ENCODE measurements at regions of chr12 and their contacts with region 1.

Region 1: GRCh38 chr12:57846577-57847319 is at the start of gene CTDSP2:
- DNase-seq: peak; percentile 99
- H3K4me3 ChIP-seq: peak within 1 kb of the TSS; percentile 100
- H3K27ac ChIP-seq: peak within 1 kb of the TSS; percentile 98
- H3K4me1 ChIP-seq: peaks cover 33% of the 10 kb centered on the region
- H3K27me3 ChIP-seq: no peaks in the 10 kb centered on the region
- CTCF ChIP-seq: no peak
- total RNA-seq, gene CTDSP2: 115 and 132 TPM in 2 replicates

Region 2: GRCh38 chr12:57592551-57593165 is 254.1 kb before region 1 on chr12:
- CTCF ChIA-PET with region 1: no interaction called
- POLR2A ChIA-PET with region 1: no interaction called
- intact Hi-C with region 1: no loop called
- DNase-seq: no peak
- H3K4me3 ChIP-seq: no peak overlapping the region
- H3K27ac ChIP-seq: no peak overlapping the region
- H3K4me1 ChIP-seq: peaks cover 7% of the 10 kb centered on the region
- H3K27me3 ChIP-seq: no peaks in the 10 kb centered on the region
- CTCF ChIP-seq: no peak

Region 3: GRCh38 chr12:57893431-57894353 is 46.9 kb after region 1 on chr12:
- CTCF ChIA-PET with region 1: interaction called, 4 read pairs
- POLR2A ChIA-PET with region 1: no interaction called
- intact Hi-C with region 1: loop called (anchors 1 kb)
- DNase-seq: peak; percentile 90
- H3K4me3 ChIP-seq: peak overlapping the region; percentile 5
- H3K27ac ChIP-seq: peak overlapping the region; percentile 97
- H3K4me1 ChIP-seq: peaks cover 71% of the 10 kb centered on the region
- H3K27me3 ChIP-seq: no peaks in the 10 kb centered on the region
- CTCF ChIP-seq: no peak

Region 4: GRCh38 chr12:57904848-57905811 is 58.4 kb after region 1 on chr12:
- CTCF ChIA-PET with region 1: interaction called, 5 read pairs
- POLR2A ChIA-PET with region 1: interaction called, 18 read pairs
- intact Hi-C with region 1: no loop called
- DNase-seq: peak; percentile 94
- H3K4me3 ChIP-seq: no peak overlapping the region
- H3K27ac ChIP-seq: no peak overlapping the region
- H3K4me1 ChIP-seq: no peaks in the 10 kb centered on the region
- H3K27me3 ChIP-seq: no peaks in the 10 kb centered on the region
- CTCF ChIP-seq: peak; percentile 100

Region 5: DNA sequence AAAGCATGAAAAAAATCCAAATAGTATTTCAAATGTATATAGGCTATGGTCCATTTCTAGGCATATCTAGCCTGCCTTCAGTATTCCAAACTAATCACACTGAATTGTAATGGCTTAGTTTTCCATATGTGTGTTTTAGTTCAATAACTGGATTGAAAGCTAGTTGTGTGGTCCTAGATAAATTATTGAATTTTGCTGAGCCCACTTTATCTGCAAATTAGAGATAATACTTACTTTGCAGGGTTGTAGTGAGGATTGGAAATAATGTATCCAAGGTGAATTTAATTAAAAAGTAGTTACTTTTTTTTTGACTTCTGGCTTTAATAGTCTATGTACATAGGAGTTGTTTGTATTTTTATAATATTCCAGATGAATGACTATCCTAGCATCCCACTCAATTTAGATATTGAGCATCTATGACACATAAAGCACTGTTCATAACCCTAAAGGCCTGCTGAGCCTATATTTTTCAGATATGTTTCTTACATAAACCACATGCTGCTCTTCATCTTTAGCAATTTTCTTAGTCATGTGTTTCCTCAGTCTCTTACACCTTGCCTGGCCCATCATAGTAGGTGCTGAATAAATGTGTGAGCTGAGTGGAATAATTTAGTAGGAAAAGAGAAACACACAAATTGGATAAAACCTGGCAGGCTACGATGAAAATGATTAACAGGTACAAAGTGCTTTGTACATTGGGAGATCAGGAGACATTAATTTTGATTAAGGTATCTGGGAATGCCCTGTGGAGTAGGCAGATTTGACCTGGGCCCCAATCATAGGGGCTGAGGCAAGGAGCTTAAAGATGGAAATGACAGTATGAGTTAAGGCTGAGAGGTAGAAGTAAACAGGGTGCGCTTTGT is 93.5 kb after region 1 on chr12:
- CTCF ChIA-PET with region 1: interaction called, 10 read pairs
- POLR2A ChIA-PET with region 1: no interaction called
- intact Hi-C with region 1: no loop called
- DNase-seq: no peak
- H3K4me3 ChIP-seq: peak overlapping the region; percentile 83
- H3K27ac ChIP-seq: no peak overlapping the region
- H3K4me1 ChIP-seq: peaks cover 6% of the 10 kb centered on the region
- H3K27me3 ChIP-seq: no peaks in the 10 kb centered on the region
- CTCF ChIP-seq: no peak